CD8-positive, alpha-beta T cell (primary cell): ENCODE measurements at regions of chr5 and their contacts with region 1.

Region 1: GRCh38 chr5:44774279-44774880 is 34.4 kb upstream of the MRPS30 start:
- DNase-seq: peak in 2 of 9 experiments; percentile 27 to 46
- ATAC-seq: no peak
- H3K4me3 ChIP-seq: no peak overlapping the region
- H3K4me3 Mint-ChIP-seq: no peak overlapping the region
- H3K27ac ChIP-seq: no peak overlapping the region
- H3K27ac Mint-ChIP-seq: no peak overlapping the region
- H3K4me1 ChIP-seq: no peaks in the 10 kb centered on the region
- H3K4me1 Mint-ChIP-seq: no peaks in the 10 kb centered on the region
- H3K27me3 ChIP-seq: no peaks in the 10 kb centered on the region
- H3K27me3 Mint-ChIP-seq: peaks cover 7% of the 10 kb centered on the region
- CTCF ChIP-seq: peak; percentile 64

Region 2: GRCh38 chr5:43631182-43631910 is 1143.0 kb before region 1 on chr5:
- CTCF ChIA-PET with region 1: no interaction called
- POLR2A ChIA-PET with region 1: no interaction called
- intact Hi-C with region 1: loop called (anchors 2 kb)
- DNase-seq: peak in 6 of 9 experiments; percentile 21 to 73 (median 42)
- ATAC-seq: peak; percentile 82
- H3K4me3 ChIP-seq: no peak overlapping the region
- H3K4me3 Mint-ChIP-seq: no peak overlapping the region
- H3K27ac ChIP-seq: no peak overlapping the region
- H3K27ac Mint-ChIP-seq: no peak overlapping the region
- H3K4me1 ChIP-seq: no peaks in the 10 kb centered on the region
- H3K4me1 Mint-ChIP-seq: peaks cover 29% of the 10 kb centered on the region
- H3K27me3 ChIP-seq: no peaks in the 10 kb centered on the region
- H3K27me3 Mint-ChIP-seq: no peaks in the 10 kb centered on the region
- CTCF ChIP-seq: peak; percentile 65

Region 3: GRCh38 chr5:43729846-43730478 is 1044.4 kb before region 1 on chr5:
- CTCF ChIA-PET with region 1: no interaction called
- POLR2A ChIA-PET with region 1: no interaction called
- intact Hi-C with region 1: loop called (anchors 2 kb)
- DNase-seq: peak in 1 of 9 experiments; percentile 4
- ATAC-seq: no peak
- H3K4me3 ChIP-seq: no peak overlapping the region
- H3K4me3 Mint-ChIP-seq: no peak overlapping the region
- H3K27ac ChIP-seq: no peak overlapping the region
- H3K27ac Mint-ChIP-seq: no peak overlapping the region
- H3K4me1 ChIP-seq: no peaks in the 10 kb centered on the region
- H3K4me1 Mint-ChIP-seq: no peaks in the 10 kb centered on the region
- H3K27me3 ChIP-seq: no peaks in the 10 kb centered on the region
- H3K27me3 Mint-ChIP-seq: peaks cover 3% of the 10 kb centered on the region
- CTCF ChIP-seq: peak; percentile 46

Region 4: GRCh38 chr5:44536650-44537260 is 237.6 kb before region 1 on chr5:
- CTCF ChIA-PET with region 1: no interaction called
- POLR2A ChIA-PET with region 1: no interaction called
- intact Hi-C with region 1: loop called in 1 of 2 experiments (anchors 10 kb)
- DNase-seq: peak in 1 of 9 experiments; percentile 3
- ATAC-seq: no peak
- H3K4me3 ChIP-seq: no peak overlapping the region
- H3K4me3 Mint-ChIP-seq: no peak overlapping the region
- H3K27ac ChIP-seq: no peak overlapping the region
- H3K27ac Mint-ChIP-seq: no peak overlapping the region
- H3K4me1 ChIP-seq: no peaks in the 10 kb centered on the region
- H3K4me1 Mint-ChIP-seq: no peaks in the 10 kb centered on the region
- H3K27me3 ChIP-seq: no peaks in the 10 kb centered on the region
- H3K27me3 Mint-ChIP-seq: no peaks in the 10 kb centered on the region
- CTCF ChIP-seq: no peak